ENCODE measurements at regions of chr7 and their contacts with region 1.

Region 1: DNA sequence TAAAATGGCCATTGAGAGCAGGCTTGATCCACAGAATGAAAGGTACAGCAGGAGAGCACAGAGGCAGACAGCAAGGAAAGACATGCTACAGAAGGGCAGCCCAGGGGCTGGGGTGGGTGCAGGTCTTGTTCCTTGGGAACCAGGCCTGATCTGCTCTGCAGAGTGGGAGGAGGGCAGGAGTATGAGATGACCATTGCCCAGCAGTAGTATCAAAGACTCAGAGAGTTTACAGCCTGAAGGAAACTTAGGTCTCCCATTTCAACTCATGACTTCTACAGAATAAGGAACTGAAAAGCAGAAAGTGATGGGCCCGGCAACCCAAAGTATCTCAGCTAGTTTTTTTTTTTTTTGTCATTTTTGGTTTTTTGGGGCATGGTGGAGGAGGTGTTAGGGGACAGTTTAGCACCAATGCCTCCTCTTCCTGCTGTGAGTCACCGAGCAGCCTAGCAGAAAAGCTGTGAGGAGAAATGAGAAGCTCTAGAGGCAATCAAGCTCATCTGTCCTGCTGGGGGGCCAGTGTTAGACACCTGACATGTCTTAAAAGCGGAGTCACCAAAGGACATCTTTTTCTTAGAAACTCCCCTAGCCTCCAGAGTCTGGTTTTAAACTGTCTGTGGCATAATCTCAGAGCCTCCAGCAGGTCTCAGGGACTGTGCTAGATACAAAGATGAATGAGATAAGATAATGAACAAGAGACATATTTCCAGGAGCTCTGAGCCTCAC is 34.3 kb upstream of the HERPUD2 start:
- DNase-seq: peak in 4 of 5 donors; percentile 46 to 81 (median 65)
- H3K4me3 ChIP-seq: no peak overlapping the region
- H3K4me3 Mint-ChIP-seq: peak overlapping the region; percentile 27 to 87 (median 62)
- H3K27ac ChIP-seq: peak overlapping the region; percentile 17
- H3K27ac Mint-ChIP-seq: peak overlapping the region; percentile 75 to 98 (median 96)
- H3K4me1 ChIP-seq: peaks cover 59% of the 10 kb centered on the region
- H3K4me1 Mint-ChIP-seq: peaks cover 67 to 76% (median 73%) of the 10 kb centered on the region in 3 donors
- H3K27me3 ChIP-seq: no peaks in the 10 kb centered on the region
- H3K27me3 Mint-ChIP-seq: peaks cover 0 to 3% of the 10 kb centered on the region in 2 donors

Region 2: DNA sequence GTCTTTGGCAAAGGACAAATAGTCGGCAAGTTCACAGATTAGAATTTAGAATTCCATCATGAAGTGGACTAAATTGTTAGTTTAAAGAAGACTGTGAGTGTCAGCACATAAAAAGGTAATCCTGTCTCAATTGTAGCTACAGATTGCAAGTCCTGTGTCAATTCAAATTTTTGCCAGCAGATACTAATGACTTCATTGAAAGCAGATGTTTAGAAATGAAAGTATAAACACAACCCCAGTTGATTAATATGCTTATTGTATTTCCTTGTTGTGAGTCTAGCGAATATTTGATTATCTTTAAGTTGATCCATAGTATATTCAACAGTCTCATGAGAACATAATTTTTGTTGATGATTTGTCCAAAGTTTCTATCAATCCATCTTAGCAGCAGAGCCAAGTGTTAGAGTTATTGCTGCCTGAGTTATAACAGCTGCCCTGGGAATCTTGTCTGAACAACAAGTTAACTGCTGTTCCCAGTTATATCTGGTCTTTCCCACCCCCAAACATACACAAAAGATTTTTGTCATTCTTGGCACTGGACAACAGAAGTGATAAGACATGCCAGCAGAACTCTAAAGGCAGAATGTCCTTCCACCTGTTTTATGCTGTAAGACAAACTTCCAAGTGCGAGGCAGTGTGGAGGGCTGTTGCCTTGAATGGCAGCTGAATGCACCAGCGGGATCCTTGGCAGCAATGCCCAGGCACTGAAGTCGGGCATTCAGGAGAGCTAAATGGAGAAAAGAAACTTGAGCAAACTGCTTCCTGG is 13.0 kb before region 1 on chr7:
- CTCF ChIA-PET with region 1: interaction called, 13 read pairs
- POLR2A ChIA-PET with region 1: interaction called, 5 read pairs
- DNase-seq: no peak
- H3K4me3 ChIP-seq: no peak overlapping the region
- H3K4me3 Mint-ChIP-seq: no peak overlapping the region
- H3K27ac ChIP-seq: no peak overlapping the region
- H3K27ac Mint-ChIP-seq: peak overlapping the region in 1 of 8 donors; percentile 22
- H3K4me1 ChIP-seq: no peaks in the 10 kb centered on the region
- H3K4me1 Mint-ChIP-seq: peaks cover 2 to 14% (median 6%) of the 10 kb centered on the region in 3 donors
- H3K27me3 ChIP-seq: no peaks in the 10 kb centered on the region
- H3K27me3 Mint-ChIP-seq: peaks cover 0 to 2% of the 10 kb centered on the region in 2 donors

Region 3: DNA sequence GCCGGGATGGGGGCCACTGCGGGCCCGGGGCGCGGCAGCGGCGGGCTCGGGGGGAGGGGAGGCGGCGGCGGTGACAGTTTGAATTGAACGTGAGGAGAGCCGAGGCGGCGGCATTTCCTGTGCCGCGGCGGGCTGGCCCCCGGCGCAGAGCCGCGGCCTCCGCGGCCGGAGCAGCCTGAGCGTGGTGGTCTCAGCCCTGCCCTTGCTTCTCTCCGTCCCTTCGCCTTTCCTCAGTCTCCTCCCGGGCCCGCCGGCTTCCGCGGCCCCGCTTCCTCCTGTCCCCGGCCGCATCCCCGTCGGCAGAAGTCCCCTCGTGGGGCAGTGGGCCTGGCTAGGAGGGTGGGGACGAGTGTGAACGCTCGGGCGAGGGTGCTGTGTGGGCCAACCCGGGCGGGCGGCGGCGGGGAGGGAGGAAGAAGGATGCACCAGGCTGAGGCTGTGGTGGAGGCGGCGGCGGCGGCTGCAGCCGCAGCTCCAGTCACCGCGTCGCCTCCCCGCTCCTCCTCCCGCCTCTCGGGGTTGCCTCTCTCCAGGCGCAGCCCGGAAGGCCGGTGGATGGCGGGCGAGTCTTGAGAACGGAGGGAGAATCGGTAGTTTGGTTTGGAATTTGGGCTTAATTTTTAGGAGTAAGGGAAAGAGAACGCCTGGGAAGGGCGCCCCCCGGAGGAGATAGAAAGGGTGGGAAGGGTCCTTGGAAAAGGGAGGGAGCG is 72.3 kb after region 1 on chr7:
- CTCF ChIA-PET with region 1: interaction called, 42 read pairs
- POLR2A ChIA-PET with region 1: interaction called, 51 read pairs
- DNase-seq: peak; percentile 73 to 86 (median 82)
- H3K4me3 ChIP-seq: peak overlapping the region; percentile 68
- H3K4me3 Mint-ChIP-seq: peak overlapping the region; percentile 86 to 97 (median 97)
- H3K27ac ChIP-seq: peak overlapping the region; percentile 96
- H3K27ac Mint-ChIP-seq: peak overlapping the region; percentile 98 to 100 (median 99)
- H3K4me1 ChIP-seq: peaks cover 46% of the 10 kb centered on the region
- H3K4me1 Mint-ChIP-seq: peaks cover 49 to 59% (median 54%) of the 10 kb centered on the region in 3 donors
- H3K27me3 ChIP-seq: no peaks in the 10 kb centered on the region
- H3K27me3 Mint-ChIP-seq: peaks cover 0 to 3% of the 10 kb centered on the region in 2 donors

Measured in CD8-positive, alpha-beta memory T cell (primary cell).